Lower lobe of right lung (tissue), 2 donors: ENCODE measurements at regions of chr10 and their contacts with region 1.

Region 1: DNA sequence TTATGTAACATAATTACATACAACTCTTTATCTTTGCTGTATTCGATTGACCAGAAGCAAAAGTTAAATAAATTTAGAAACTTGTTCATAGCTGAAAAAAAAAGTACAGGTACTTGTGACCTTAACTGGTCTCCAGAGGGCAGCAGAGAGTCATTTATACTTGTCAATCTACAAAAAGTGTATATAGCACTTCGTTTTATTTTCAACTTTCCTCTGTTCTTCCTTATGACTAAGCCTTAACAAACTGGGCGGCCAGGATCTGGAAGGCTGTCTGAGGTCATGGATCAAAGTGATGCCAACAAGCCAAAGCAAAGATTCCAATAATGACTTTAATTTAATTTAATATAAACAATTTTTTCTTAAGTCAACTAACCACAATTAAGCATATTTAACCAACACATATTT is 29.8 kb downstream of the C10orf67 start:
- DNase-seq: no peak
- ATAC-seq: peak; percentile 57 to 67
- H3K4me3 ChIP-seq: no peak overlapping the region
- H3K27ac ChIP-seq: no peak overlapping the region
- H3K4me1 ChIP-seq: peaks cover 10% of the 10 kb centered on the region
- H3K27me3 ChIP-seq: no peaks in the 10 kb centered on the region
- CTCF ChIP-seq: peak; percentile 69

Region 2: GRCh38 chr10:23362879-23363792 is 48.3 kb after region 1 on chr10:
- intact Hi-C with region 1: no loop called
- DNase-seq: no peak
- ATAC-seq: no peak
- H3K4me3 ChIP-seq: no peak overlapping the region
- H3K27ac ChIP-seq: no peak overlapping the region
- H3K4me1 ChIP-seq: peaks cover 2% of the 10 kb centered on the region
- H3K27me3 ChIP-seq: no peaks in the 10 kb centered on the region
- CTCF ChIP-seq: no peak

Region 3: DNA sequence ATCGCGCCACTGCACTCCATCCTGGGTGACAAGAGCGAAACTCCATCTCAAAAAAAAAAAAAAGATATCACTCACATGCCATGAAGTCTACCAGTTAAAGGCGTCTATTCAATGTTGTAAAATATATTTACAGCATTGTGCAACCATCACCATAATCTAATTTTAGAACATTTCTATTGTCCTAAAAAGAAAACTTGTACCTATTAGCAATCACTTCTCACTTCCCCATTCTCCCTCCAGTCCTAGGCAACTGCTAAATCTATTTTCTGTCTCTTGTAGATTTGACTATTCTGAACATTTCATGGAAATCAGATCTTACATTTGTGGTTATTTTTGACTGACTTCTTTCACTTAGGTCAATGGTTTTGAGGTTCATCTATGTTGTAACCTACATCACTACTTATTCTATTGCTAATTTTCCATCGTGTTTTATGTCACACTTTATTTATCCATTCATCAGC is 98.8 kb after region 1 on chr10:
- intact Hi-C with region 1: no loop called
- DNase-seq: no peak
- ATAC-seq: peak; percentile 61 to 70
- H3K4me3 ChIP-seq: no peak overlapping the region
- H3K27ac ChIP-seq: no peak overlapping the region
- H3K4me1 ChIP-seq: no peaks in the 10 kb centered on the region
- H3K27me3 ChIP-seq: no peaks in the 10 kb centered on the region
- CTCF ChIP-seq: no peak

Region 4: DNA sequence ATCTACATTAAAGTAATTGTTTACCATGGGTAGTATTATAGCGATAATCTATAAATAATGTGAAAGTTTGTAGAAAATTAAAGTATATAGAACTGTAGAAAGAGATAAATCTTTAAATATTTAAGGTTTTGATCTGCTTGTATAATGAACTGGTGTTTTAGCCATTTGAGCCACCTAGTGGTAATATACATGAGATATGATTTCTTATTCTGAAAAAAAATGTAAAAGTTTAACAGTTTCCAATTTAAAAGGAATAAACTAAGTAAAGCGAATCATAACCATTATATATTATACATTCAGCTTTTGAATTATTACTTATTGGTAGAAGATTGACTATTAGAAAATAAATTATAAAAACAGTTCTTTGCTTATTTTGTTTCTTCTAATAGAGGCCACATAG is 215.2 kb after region 1 on chr10:
- intact Hi-C with region 1: loop called (anchors 5 kb)
- DNase-seq: no peak
- ATAC-seq: no peak
- H3K4me3 ChIP-seq: no peak overlapping the region
- H3K27ac ChIP-seq: no peak overlapping the region
- H3K4me1 ChIP-seq: no peaks in the 10 kb centered on the region
- H3K27me3 ChIP-seq: no peaks in the 10 kb centered on the region
- CTCF ChIP-seq: no peak

Region 5: GRCh38 chr10:24153031-24153430 is 838.2 kb after region 1 on chr10:
- intact Hi-C with region 1: no loop called
- DNase-seq: no peak
- ATAC-seq: no peak
- H3K4me3 ChIP-seq: no peak overlapping the region
- H3K27ac ChIP-seq: no peak overlapping the region
- H3K4me1 ChIP-seq: no peaks in the 10 kb centered on the region
- H3K27me3 ChIP-seq: no peaks in the 10 kb centered on the region
- CTCF ChIP-seq: no peak

Region 6: DNA sequence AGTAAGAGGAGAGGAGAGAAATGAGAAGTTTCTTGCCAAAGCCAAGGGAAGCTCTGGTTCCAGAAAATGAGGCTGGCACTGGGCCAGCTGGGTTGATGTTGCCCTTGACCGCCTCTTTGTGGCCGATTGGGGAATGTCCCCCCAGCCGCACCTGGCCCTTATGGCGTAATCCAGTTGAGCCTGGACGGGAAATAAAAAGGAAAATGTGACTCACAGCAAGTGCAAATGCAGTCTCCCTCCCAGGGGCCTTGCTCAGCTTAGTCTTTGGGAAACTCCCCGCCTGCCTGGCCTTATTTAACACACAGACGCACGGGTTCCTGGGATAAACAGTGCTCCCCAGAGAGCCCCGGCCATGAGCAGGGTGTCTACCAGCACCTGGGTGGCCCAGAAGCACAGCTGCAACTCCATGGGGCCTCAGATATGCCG is 1068.9 kb after region 1 on chr10:
- intact Hi-C with region 1: no loop called
- DNase-seq: peak; percentile 86
- ATAC-seq: peak; percentile 93 to 95
- H3K4me3 ChIP-seq: no peak overlapping the region
- H3K27ac ChIP-seq: peak overlapping the region; percentile 66
- H3K4me1 ChIP-seq: peaks cover 10% of the 10 kb centered on the region
- H3K27me3 ChIP-seq: no peaks in the 10 kb centered on the region
- CTCF ChIP-seq: peak; percentile 59